Heart right ventricle (tissue), 16 donors: ENCODE measurements at regions of chr2 and their contacts with region 1.

Region 1: DNA sequence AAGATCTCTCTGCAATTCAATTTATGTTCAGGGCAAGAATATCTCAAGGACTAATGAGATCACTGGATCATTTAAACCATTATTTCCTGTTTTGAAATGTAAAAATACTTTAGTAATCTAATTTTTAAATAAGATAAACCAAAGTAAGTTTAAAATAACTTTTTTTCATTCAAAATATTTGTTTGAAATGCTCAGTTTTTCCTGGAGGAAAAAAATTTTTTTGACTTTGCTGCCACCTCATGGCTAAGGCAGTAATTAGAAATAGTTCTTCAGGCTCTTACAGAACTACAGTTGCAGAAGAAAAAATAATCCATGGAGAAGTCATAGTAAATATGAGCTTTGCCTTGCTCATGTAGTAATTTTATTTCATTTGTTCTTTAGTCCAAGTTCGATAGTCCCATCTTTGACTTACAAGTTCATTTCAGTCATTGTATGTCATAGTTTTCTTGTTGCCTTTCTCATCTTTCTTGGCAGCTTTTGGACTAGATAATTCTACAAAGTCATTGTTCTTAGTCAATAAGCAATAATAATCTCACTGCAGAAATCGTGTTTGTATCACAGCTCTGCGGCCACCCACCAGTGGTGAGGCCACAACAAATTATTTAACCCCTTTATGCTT is 127.4 kb downstream of the DPP4 start:
- DNase-seq: no peak
- ATAC-seq: no peak
- H3K4me3 ChIP-seq: no peak overlapping the region
- H3K27ac ChIP-seq: no peak overlapping the region
- H3K4me1 ChIP-seq: no peaks in the 10 kb centered on the region
- H3K27me3 ChIP-seq: peaks cover 0 to 33% (median 7%) of the 10 kb centered on the region in 7 donors
- CTCF ChIP-seq: peak in 7 of 9 donors; percentile 34 to 61 (median 55)

Region 2: GRCh38 chr2:161250864-161251436 is 695.6 kb before region 1 on chr2:
- intact Hi-C with region 1: loop called in 2 of 10 experiments (anchors 5 kb)
- DNase-seq: no peak
- ATAC-seq: no peak
- H3K4me3 ChIP-seq: no peak overlapping the region
- H3K27ac ChIP-seq: no peak overlapping the region
- H3K4me1 ChIP-seq: no peaks in the 10 kb centered on the region
- H3K27me3 ChIP-seq: peaks cover 0 to 21% (median 8%) of the 10 kb centered on the region in 7 donors
- CTCF ChIP-seq: peak in 7 of 9 donors; percentile 48 to 64 (median 55)

Region 3: DNA sequence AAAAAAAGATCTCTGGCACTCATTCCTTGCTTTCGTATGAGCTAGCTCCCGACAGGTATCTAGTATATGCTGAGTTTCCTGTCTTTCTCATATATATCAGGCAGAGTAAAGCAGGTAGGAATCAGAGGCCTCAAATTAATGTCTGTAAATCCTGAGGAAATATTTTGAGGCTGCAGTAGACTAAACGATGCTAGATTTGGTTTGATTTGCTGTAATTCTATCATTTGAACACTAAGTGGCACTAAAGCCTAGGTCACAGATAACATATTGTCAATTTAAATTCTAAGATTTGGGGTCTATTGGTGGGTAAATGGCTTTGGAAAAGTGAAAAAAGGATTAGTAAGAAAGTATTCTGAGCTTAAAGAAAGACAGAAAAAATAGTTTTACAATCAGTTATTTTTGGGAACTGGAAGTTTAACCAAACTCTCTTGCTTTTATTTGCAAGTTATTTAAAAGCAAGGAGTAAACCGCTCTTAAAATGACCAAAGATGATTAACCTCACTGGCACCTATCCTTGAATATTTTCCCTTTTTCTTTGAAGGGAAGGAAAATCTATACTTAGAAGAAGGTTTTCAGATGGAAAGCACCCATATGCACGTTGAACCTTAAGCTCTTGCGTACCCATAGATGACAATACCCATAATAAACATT is 360.0 kb before region 1 on chr2:
- intact Hi-C with region 1: loop called in 7 of 10 experiments (anchors 5 to 10 kb)
- DNase-seq: no peak
- ATAC-seq: no peak
- H3K4me3 ChIP-seq: no peak overlapping the region
- H3K27ac ChIP-seq: no peak overlapping the region
- H3K4me1 ChIP-seq: no peaks in the 10 kb centered on the region
- H3K27me3 ChIP-seq: peaks cover 0 to 6% (median 0%) of the 10 kb centered on the region in 7 donors
- CTCF ChIP-seq: peak; percentile 16 to 73 (median 54)